ENCODE measurements at regions of chr2 and their contacts with region 1.

Region 1: DNA sequence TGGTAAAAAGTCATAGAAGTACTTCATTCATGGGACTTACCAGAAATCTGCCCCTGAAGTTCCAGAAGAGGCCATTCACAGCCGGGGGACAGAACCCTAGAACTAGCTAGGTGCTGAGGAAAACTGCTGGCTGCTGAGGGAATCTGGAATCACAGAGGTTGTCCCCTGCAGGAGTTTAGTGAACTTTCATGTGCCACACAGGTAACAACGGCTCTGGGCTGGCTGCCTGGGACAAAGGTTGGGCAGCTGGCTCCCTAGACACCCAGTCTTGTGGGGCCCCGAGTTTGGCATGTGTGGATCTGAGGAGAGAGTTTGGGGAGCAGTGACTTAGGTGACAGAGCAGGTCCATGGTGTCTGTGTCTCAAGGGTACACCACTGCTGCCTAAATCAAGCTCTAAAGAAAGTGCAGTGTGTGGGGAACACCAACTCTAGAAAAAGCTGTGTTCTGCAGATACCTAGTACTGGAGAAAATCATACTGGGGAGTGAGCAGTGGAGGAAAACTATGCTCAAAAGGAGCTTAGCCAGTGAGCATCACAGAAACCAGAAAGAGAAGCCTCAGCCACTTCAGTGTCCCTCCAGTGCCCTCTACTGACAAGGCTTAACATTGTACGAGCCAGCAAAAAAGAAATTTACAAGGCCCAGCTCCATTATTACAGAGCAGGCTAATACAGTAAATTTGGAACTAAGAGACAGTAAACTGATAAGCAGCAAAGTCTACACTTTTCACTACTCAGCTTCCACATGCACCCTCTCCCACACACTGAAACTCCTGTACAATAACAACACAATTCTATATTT is 15.2 kb downstream of the GALNT3 start:
- DNase-seq: no peak
- ATAC-seq: no peak
- H3K4me3 ChIP-seq: no peak overlapping the region
- H3K4me3 Mint-ChIP-seq: no peak overlapping the region
- H3K27ac ChIP-seq: no peak overlapping the region
- H3K27ac Mint-ChIP-seq: no peak overlapping the region
- H3K4me1 ChIP-seq: peaks cover 0 to 9% of the 10 kb centered on the region in 2 donors
- H3K4me1 Mint-ChIP-seq: peaks cover 0 to 14% (median 0%) of the 10 kb centered on the region in 7 donors
- H3K27me3 ChIP-seq: no peaks in the 10 kb centered on the region
- H3K27me3 Mint-ChIP-seq: peaks cover 0 to 6% (median 0%) of the 10 kb centered on the region in 5 donors

Region 2: DNA sequence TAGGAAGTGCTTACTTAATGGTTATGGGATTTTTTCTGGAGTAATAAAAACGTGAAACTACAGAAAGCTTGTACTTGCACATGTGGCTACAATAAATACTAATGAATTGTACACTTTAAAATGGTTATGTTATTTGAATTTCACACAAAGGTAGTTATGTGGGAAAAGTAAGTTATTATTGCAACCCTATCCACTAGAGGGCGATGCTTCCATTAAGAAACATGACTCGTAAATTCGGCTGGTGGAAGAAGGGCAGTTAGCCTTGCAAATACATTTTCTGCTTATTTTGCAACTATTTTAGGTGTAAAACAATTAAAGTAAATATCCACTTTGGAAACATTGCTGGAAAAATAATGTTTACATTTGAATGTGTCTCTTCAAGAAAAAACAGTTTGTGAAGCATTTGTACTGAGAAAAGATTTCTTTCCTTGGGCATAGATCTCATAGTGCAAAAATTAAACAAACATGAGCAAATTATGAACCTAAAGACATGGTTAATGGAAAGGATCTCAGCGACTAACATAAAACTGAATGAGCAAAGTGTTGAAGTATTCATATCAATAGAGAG is 377.5 kb before region 1 on chr2:
- CTCF ChIA-PET with region 1: no interaction called
- POLR2A ChIA-PET with region 1: no interaction called
- intact Hi-C with region 1: loop called in 1 of 2 experiments (anchors 2 kb)
- DNase-seq: peak in 7 of 9 donors; percentile 8 to 56 (median 39)
- ATAC-seq: peak; percentile 60
- H3K4me3 ChIP-seq: no peak overlapping the region
- H3K4me3 Mint-ChIP-seq: no peak overlapping the region
- H3K27ac ChIP-seq: no peak overlapping the region
- H3K27ac Mint-ChIP-seq: no peak overlapping the region
- H3K4me1 ChIP-seq: no peaks in the 10 kb centered on the region
- H3K4me1 Mint-ChIP-seq: peaks cover 0 to 3% (median 0%) of the 10 kb centered on the region in 7 donors
- H3K27me3 ChIP-seq: no peaks in the 10 kb centered on the region
- H3K27me3 Mint-ChIP-seq: peaks cover 14 to 35% (median 26%) of the 10 kb centered on the region in 5 donors

Region 3: GRCh38 chr2:165794536-165794928 is 15.7 kb after region 1 on chr2:
- CTCF ChIA-PET with region 1: no interaction called
- POLR2A ChIA-PET with region 1: no interaction called
- intact Hi-C with region 1: loop called in 1 of 2 experiments (anchors 2 kb)
- DNase-seq: peak in 6 of 9 donors; percentile 25 to 65 (median 32)
- ATAC-seq: peak; percentile 91
- H3K4me3 ChIP-seq: peak overlapping the region; percentile 58
- H3K4me3 Mint-ChIP-seq: peak overlapping the region; percentile 85 to 97 (median 88)
- H3K27ac ChIP-seq: no peak overlapping the region
- H3K27ac Mint-ChIP-seq: peak overlapping the region in 5 of 9 donors; percentile 21 to 97 (median 44)
- H3K4me1 ChIP-seq: peaks cover 0 to 6% of the 10 kb centered on the region in 2 donors
- H3K4me1 Mint-ChIP-seq: peaks cover 14 to 42% (median 20%) of the 10 kb centered on the region in 7 donors
- H3K27me3 ChIP-seq: peaks cover 0 to 7% of the 10 kb centered on the region in 2 donors
- H3K27me3 Mint-ChIP-seq: peaks cover 12 to 46% (median 37%) of the 10 kb centered on the region in 5 donors